ENCODE measurements at regions of chr15 and their contacts with region 1.

Region 1: GRCh38 chr15:39782441-39783138 is at the start of gene FSIP1:
- DNase-seq: peak; percentile 96
- H3K4me3 Mint-ChIP-seq: peak within 1 kb of the TSS; percentile 91
- H3K27ac Mint-ChIP-seq: peak within 1 kb of the TSS; percentile 1
- H3K4me1 Mint-ChIP-seq: peaks cover 15% of the 10 kb centered on the region
- H3K27me3 Mint-ChIP-seq: no peaks in the 10 kb centered on the region
- CTCF ChIP-seq: no peak
- total RNA-seq, gene FSIP1: 2.2 and 3.2 TPM in 2 replicates

Region 2: DNA sequence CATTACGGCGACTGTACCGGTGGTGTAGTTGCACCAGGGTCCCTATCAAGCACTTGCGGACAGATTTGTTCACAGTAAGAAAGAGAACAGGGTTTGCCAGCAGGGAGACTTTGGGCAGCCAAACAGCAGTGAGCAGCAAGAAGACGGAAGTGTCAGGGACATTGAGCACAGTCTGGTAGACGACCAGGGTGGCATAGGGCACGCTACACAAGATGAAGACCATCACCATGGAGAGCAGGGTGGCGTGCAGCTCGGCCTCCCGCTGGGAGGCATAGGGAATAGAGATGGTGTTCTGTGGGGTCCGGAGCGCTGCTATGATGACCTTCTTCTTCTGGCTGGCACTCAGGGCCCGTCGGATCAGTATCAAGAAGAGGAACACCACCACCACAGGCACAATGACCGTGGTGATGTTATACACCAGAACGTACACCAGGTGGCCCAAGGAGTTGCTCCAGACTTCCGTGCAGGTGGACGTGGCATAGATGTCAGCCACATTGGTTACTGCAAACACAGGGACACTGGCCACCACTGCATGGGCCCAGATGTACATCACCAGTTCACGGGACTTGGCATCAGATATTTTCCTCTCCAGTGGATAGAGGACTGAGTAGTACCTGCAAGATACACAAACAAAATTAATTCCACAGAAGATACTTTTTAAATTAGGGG is 19.2 kb after region 1 on chr15:
- CTCF ChIA-PET with region 1: interaction called, 14 read pairs
- POLR2A ChIA-PET with region 1: interaction called, 5 read pairs
- intact Hi-C with region 1: no loop called
- DNase-seq: peak; percentile 51
- H3K4me3 Mint-ChIP-seq: no peak overlapping the region
- H3K27ac Mint-ChIP-seq: no peak overlapping the region
- H3K4me1 Mint-ChIP-seq: peaks cover 9% of the 10 kb centered on the region
- H3K27me3 Mint-ChIP-seq: no peaks in the 10 kb centered on the region
- CTCF ChIP-seq: peak; percentile 30

Region 3: GRCh38 chr15:39874890-39875549 is 92.4 kb after region 1 on chr15:
- CTCF ChIA-PET with region 1: interaction called, 13 read pairs
- POLR2A ChIA-PET with region 1: interaction called, 7 read pairs
- intact Hi-C with region 1: loop called (anchors 1 kb)
- DNase-seq: peak; percentile 62
- H3K4me3 Mint-ChIP-seq: no peak overlapping the region
- H3K27ac Mint-ChIP-seq: no peak overlapping the region
- H3K4me1 Mint-ChIP-seq: no peaks in the 10 kb centered on the region
- H3K27me3 Mint-ChIP-seq: no peaks in the 10 kb centered on the region
- CTCF ChIP-seq: peak; percentile 68

Region 4: GRCh38 chr15:39976291-39977274 is 194.0 kb after region 1 on chr15:
- CTCF ChIA-PET with region 1: interaction called, 3 read pairs
- POLR2A ChIA-PET with region 1: no interaction called
- intact Hi-C with region 1: loop called (anchors 2 kb)
- DNase-seq: no peak
- H3K4me3 Mint-ChIP-seq: no peak overlapping the region
- H3K27ac Mint-ChIP-seq: no peak overlapping the region
- H3K4me1 Mint-ChIP-seq: no peaks in the 10 kb centered on the region
- H3K27me3 Mint-ChIP-seq: no peaks in the 10 kb centered on the region
- CTCF ChIP-seq: no peak

Region 5: DNA sequence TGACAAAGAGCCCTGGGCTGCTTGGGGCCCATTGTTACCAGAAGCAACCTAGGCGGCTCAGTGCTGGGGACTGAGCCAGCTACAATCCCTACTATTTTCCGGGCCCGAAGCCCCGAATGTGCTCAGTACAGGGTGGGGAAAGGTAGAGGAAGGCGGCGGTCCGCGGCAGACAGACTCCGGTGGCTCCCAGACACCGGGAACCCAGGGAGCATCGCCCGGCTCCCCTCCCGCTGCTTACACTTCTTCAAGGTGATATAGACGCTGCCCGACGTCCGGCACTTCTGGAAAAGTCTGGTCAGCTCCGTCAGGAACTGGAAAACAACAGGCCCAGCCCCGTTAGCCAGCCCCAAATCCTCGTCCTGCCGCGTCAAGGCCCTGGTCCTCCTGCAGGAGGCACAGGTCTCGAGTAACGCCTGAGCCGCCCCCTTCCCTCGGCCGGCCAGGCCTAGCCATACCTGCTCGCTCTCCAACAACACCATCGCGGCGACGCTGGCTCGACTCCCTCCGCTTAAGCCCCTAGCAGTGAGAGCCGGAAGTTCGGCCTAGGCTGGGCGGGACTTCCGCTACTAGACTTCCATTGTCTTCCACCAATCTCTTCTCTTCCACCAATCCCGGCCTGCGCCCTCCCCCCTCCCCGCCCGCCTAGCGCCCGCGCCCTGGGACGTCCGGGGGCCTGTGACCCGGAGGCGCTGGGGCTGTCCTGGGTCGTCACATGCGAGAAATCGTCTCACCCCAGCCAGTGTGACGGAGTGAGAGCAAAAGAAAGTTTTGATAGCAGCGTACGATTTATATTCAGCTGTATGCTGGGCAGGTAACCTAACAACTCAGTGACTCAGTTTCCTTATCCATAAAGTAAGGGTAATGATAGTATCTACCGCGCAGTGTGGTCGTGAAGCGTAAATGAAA is 256.3 kb after region 1 on chr15 and contains the start of gene SRP14:
- CTCF ChIA-PET with region 1: interaction called, 5 read pairs
- POLR2A ChIA-PET with region 1: interaction called, 12 read pairs
- intact Hi-C with region 1: loop called (anchors 2 kb)
- DNase-seq: peak; percentile 93
- H3K4me3 Mint-ChIP-seq: peak within 1 kb of the TSS; percentile 92
- H3K27ac Mint-ChIP-seq: peak within 1 kb of the TSS; percentile 97
- H3K4me1 Mint-ChIP-seq: peaks cover 9% of the 10 kb centered on the region
- H3K27me3 Mint-ChIP-seq: no peaks in the 10 kb centered on the region
- CTCF ChIP-seq: no peak
- total RNA-seq, gene SRP14: 165 and 203 TPM in 2 replicates

Region 6: GRCh38 chr15:40190591-40190990 is 408.0 kb after region 1 on chr15:
- CTCF ChIA-PET with region 1: no interaction called
- POLR2A ChIA-PET with region 1: no interaction called
- intact Hi-C with region 1: loop called (anchors 10 kb)
- DNase-seq: peak; percentile 48
- H3K4me3 Mint-ChIP-seq: no peak overlapping the region
- H3K27ac Mint-ChIP-seq: no peak overlapping the region
- H3K4me1 Mint-ChIP-seq: peaks cover 6% of the 10 kb centered on the region
- H3K27me3 Mint-ChIP-seq: no peaks in the 10 kb centered on the region
- CTCF ChIP-seq: no peak

Measured in MCF 10A (cell line).